SK-N-SH (cell line): ENCODE measurements at regions of chr1 and their contacts with region 1.

Region 1: DNA sequence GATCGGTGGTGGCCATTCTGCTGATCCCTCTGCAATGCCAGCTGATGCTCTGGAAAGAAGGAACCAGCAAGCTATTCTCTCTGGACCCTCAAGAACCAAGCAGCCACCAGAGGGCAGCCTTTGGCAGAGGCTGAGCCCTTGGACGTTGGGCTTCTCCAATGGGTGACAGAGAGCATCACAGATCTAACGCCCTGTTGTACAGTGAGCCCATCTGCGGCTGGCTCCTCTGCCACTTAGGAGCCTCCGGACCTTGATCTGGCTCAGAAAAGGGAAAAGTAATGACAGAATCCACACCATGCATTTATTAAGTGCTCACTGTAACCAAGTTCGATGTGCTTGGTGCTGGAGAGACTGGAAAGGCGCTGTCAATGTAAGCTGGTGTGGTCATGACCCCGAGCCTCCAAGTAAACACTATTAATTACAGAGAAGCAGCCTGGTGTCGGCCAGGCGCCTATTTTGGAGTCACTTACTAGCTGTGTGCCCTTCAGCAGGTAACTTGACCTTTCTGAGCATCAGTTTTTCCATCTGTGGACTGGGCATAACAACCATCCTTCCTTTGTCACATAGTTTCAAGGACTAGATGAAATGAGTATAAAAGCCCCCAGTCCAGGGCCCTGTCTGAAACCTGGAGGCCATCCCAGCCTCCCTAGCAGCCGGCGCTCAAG is 34.9 kb downstream of the ECE1 start:
- DNase-seq: peak; percentile 83
- H3K4me3 ChIP-seq: no peak overlapping the region; a peak in 1 of 4 replicates
- H3K27ac ChIP-seq: peak overlapping the region; percentile 56 to 98; a peak in 3 of 4 replicates
- H3K4me1 ChIP-seq: peaks cover 8 to 37% of the 10 kb centered on the region in 2 experiments; a peak in 2 of 4 replicates
- H3K27me3 ChIP-seq: no peaks in the 10 kb centered on the region
- CTCF ChIP-seq: peak; percentile 86
- EP300 ChIP-seq: peak in 1 of 2 experiments; percentile 26; a peak in 1 of 4 replicates
- RAD21 ChIP-seq: peak; percentile 99

Region 2: GRCh38 chr1:21216835-21217811 is 38.3 kb before region 1 on chr1:
- CTCF ChIA-PET with region 1: interaction called, 16 read pairs
- POLR2A ChIA-PET with region 1: interaction called, 4 read pairs
- DNase-seq: peak; percentile 67
- H3K4me3 ChIP-seq: no peak overlapping the region; a peak in 1 of 4 replicates
- H3K27ac ChIP-seq: no peak overlapping the region; a peak in 1 of 4 replicates
- H3K4me1 ChIP-seq: peaks cover 0 to 13% of the 10 kb centered on the region in 2 experiments; a peak in 1 of 4 replicates
- H3K27me3 ChIP-seq: no peaks in the 10 kb centered on the region
- CTCF ChIP-seq: peak; percentile 86
- EP300 ChIP-seq: no peak
- RAD21 ChIP-seq: peak; percentile 52

Region 3: DNA sequence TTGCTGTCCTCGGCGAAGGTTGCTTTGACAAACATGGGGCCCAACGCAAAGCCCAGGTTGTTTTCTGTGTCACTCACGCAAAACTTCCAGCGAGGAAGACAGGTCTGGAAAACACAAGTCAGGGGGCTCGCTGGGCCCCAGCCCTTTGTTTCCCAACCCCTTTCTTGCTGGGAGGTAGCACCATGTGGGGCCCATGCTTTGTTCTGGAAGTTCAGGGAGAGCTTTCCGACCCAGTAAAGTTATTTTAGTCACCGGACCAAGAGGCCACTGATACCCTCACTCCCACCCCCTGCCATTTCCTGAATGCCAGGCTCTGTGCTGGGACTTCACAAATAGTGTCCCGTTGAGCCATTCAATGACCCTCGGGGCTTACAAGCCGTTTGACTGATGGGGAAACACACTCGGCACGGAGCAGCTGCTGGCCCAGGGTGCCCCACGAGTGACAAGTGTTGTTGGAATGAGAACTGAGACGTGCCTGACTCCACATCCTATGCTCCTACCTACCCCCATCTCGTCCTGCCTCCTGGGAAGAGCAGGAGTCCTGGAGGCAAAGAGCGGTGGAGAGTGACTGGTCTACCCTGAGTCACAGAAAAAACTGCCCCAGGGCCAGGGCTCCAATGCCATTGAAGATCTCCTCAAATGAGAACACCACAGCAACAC is 17.1 kb before region 1 on chr1:
- CTCF ChIA-PET with region 1: interaction called, 73 read pairs
- POLR2A ChIA-PET with region 1: no interaction called
- DNase-seq: no peak
- H3K4me3 ChIP-seq: no peak overlapping the region
- H3K27ac ChIP-seq: no peak overlapping the region
- H3K4me1 ChIP-seq: no peaks in the 10 kb centered on the region
- H3K27me3 ChIP-seq: no peaks in the 10 kb centered on the region
- CTCF ChIP-seq: no peak
- EP300 ChIP-seq: no peak
- RAD21 ChIP-seq: no peak

Region 4: GRCh38 chr1:21270086-21270689 is 14.8 kb after region 1 on chr1:
- CTCF ChIA-PET with region 1: interaction called, 95 read pairs
- POLR2A ChIA-PET with region 1: interaction called, 3 read pairs
- DNase-seq: peak; percentile 75
- H3K4me3 ChIP-seq: no peak overlapping the region; a peak in 1 of 4 replicates
- H3K27ac ChIP-seq: peak overlapping the region in 1 of 2 experiments; percentile 59; a peak in 1 of 4 replicates
- H3K4me1 ChIP-seq: peaks cover 0 to 44% of the 10 kb centered on the region in 2 experiments; a peak in 1 of 4 replicates
- H3K27me3 ChIP-seq: no peaks in the 10 kb centered on the region
- CTCF ChIP-seq: peak; percentile 92
- EP300 ChIP-seq: no peak
- RAD21 ChIP-seq: peak; percentile 62

Region 5: DNA sequence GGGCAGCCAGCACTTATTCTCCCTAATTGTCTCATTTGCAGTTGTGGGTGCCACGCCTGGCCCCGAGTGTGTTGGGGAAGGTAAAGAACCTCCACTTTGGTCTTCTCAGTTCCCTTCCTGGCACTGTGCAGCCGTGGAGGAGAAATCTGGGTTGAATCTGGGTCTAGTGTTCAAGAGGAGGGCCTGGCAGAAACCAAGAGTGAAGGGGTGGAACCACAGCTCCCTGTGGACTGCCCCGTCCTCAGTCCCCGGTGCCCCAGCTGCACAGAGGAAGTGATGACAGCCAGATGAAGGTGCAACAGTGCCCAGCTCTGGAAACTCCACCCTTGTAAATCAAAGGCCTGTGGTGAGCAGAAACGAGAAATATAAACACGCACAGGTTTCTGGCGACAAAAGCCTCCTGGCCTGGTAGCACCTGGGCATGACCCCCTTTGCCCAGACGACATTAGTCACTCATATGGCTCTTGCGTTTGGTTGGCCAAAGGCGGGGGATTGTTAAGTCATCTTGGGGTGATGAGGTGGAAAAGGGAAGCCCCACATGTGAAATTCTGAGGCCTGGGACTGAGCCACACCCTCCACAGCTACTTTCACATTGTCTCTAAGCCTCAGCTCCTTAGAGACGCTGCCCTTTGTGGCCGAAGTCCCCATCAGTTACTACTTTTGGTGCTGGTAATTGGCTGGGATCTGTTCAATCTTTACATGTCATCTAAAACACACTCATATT is 39.0 kb after region 1 on chr1:
- CTCF ChIA-PET with region 1: interaction called, 18 read pairs
- POLR2A ChIA-PET with region 1: no interaction called
- DNase-seq: no peak
- H3K4me3 ChIP-seq: no peak overlapping the region
- H3K27ac ChIP-seq: peak overlapping the region in 1 of 2 experiments; percentile 23; a peak in 1 of 4 replicates
- H3K4me1 ChIP-seq: peaks cover 0 to 40% of the 10 kb centered on the region in 2 experiments; a peak in 2 of 4 replicates
- H3K27me3 ChIP-seq: no peaks in the 10 kb centered on the region
- CTCF ChIP-seq: no peak
- EP300 ChIP-seq: no peak
- RAD21 ChIP-seq: no peak

Region 6: GRCh38 chr1:21308847-21309652 is 53.6 kb after region 1 on chr1:
- CTCF ChIA-PET with region 1: interaction called, 31 read pairs
- POLR2A ChIA-PET with region 1: interaction called, 12 read pairs
- DNase-seq: peak; percentile 60
- H3K4me3 ChIP-seq: no peak overlapping the region
- H3K27ac ChIP-seq: peak overlapping the region; percentile 24 to 99; a peak in 3 of 4 replicates
- H3K4me1 ChIP-seq: peaks cover 49 to 83% of the 10 kb centered on the region in 2 experiments
- H3K27me3 ChIP-seq: no peaks in the 10 kb centered on the region
- CTCF ChIP-seq: no peak
- EP300 ChIP-seq: peak in 1 of 2 experiments; percentile 84; a peak in 2 of 4 replicates
- RAD21 ChIP-seq: 0 out of 2 replicates have a peak, but pooled peaks have one; percentile 6

Region 7: DNA sequence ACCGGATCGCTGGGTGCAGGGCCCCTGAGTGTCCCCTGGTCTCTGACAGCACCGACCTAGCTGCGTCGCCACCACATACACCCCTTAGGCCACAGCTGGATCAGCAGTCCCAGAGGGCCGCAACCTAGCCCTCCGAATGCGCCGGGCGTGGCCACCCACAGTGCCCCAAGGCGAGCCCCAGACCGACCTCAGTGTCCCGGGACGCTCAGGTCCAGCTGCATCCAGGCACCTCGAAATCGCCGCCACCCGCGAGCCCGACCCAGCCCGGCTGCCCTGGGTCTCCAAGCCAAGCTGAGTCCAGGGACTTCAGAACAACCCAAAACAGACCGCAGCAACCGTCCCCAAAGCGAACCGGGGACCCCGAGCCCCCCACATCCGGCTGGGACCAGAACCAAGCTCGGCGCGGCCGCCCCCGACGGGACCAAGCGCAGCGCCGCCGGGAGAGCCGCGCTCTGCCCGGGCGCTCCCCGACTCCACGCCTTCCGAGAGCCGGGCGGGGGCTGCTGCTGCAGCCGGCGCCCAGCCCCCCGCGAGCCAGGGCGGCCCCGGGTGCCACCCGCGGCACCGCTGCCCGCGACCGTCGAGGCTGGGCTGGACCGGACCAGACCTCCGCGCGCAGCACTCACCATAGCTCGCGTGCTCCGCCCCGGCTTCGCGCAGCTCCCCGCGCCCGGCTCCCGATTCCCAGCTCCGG is 89.5 kb after region 1 on chr1:
- CTCF ChIA-PET with region 1: interaction called, 65 read pairs
- POLR2A ChIA-PET with region 1: interaction called, 18 read pairs
- DNase-seq: peak; percentile 60
- H3K4me3 ChIP-seq: peak overlapping the region; percentile 73 to 78
- H3K27ac ChIP-seq: peak overlapping the region in 1 of 2 experiments; percentile 65; a peak in 1 of 4 replicates
- H3K4me1 ChIP-seq: peaks cover 0 to 48% of the 10 kb centered on the region in 2 experiments; a peak in 1 of 4 replicates
- H3K27me3 ChIP-seq: no peaks in the 10 kb centered on the region; the same call in 1 of the 2 replicates
- CTCF ChIP-seq: no peak
- EP300 ChIP-seq: no peak
- RAD21 ChIP-seq: no peak

Region 8: DNA sequence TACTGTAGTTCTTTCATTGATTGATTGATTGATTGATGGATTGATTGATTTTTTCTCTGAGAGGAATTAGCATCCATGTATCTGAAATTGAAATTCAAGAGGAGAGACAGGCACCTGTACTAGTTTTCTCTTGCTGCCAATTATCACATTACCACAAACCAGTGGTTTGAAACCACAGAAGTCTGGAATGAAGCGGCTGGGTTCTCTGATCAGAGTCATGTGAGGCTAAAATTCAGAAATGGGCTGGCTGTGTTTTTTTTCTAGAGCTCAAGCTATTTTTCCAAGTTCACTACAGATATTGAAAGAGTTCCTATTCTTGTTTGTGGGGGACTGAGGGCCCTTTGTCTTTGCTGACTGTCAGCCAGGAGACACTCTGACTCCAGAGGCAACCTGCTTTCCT is 194.5 kb after region 1 on chr1:
- CTCF ChIA-PET with region 1: no interaction called
- POLR2A ChIA-PET with region 1: no interaction called
- DNase-seq: no peak
- H3K4me3 ChIP-seq: no peak overlapping the region
- H3K27ac ChIP-seq: peak overlapping the region; percentile 63 to 72; a peak in 3 of 4 replicates
- H3K4me1 ChIP-seq: peaks cover 2 to 31% of the 10 kb centered on the region in 2 experiments; a peak in 3 of 4 replicates
- H3K27me3 ChIP-seq: no peaks in the 10 kb centered on the region
- CTCF ChIP-seq: no peak
- EP300 ChIP-seq: no peak
- RAD21 ChIP-seq: no peak